Natural killer cell (primary cell): ENCODE measurements at regions of chr9 and their contacts with region 1.

Region 1: GRCh38 chr9:124040935-124041816 is 29.6 kb downstream of the LHX2 start:
- DNase-seq: peak; percentile 56 to 57
- ATAC-seq: peak; percentile 40 to 85 (median 68)
- H3K4me3 ChIP-seq: no peak overlapping the region
- H3K4me3 Mint-ChIP-seq: peak overlapping the region; percentile 35
- H3K27ac ChIP-seq: no peak overlapping the region
- H3K27ac Mint-ChIP-seq: no peak overlapping the region
- H3K4me1 ChIP-seq: peaks cover 9% of the 10 kb centered on the region
- H3K4me1 Mint-ChIP-seq: peaks cover 0 to 7% of the 10 kb centered on the region in 2 donors
- H3K27me3 ChIP-seq: peaks cover 21% of the 10 kb centered on the region
- H3K27me3 Mint-ChIP-seq: peaks cover 26 to 45% of the 10 kb centered on the region in 2 donors
- CTCF ChIP-seq: peak; percentile 93

Region 2: GRCh38 chr9:123401879-123402513 is 639.2 kb before region 1 on chr9:
- intact Hi-C with region 1: loop called (anchors 5 kb)
- DNase-seq: peak in 1 of 2 donors; percentile 21
- ATAC-seq: no peak
- H3K4me3 ChIP-seq: no peak overlapping the region
- H3K4me3 Mint-ChIP-seq: no peak overlapping the region
- H3K27ac ChIP-seq: no peak overlapping the region
- H3K27ac Mint-ChIP-seq: no peak overlapping the region
- H3K4me1 ChIP-seq: no peaks in the 10 kb centered on the region
- H3K4me1 Mint-ChIP-seq: peaks cover 0 to 5% of the 10 kb centered on the region in 2 donors
- H3K27me3 ChIP-seq: no peaks in the 10 kb centered on the region
- H3K27me3 Mint-ChIP-seq: no peaks in the 10 kb centered on the region
- CTCF ChIP-seq: no peak

Region 3: GRCh38 chr9:123544007-123544827 is 497.0 kb before region 1 on chr9:
- intact Hi-C with region 1: loop called (anchors 1 kb)
- DNase-seq: peak in 1 of 2 donors; percentile 52
- ATAC-seq: no peak
- H3K4me3 ChIP-seq: no peak overlapping the region
- H3K4me3 Mint-ChIP-seq: no peak overlapping the region
- H3K27ac ChIP-seq: no peak overlapping the region
- H3K27ac Mint-ChIP-seq: no peak overlapping the region
- H3K4me1 ChIP-seq: no peaks in the 10 kb centered on the region
- H3K4me1 Mint-ChIP-seq: peaks cover 7 to 30% of the 10 kb centered on the region in 2 donors
- H3K27me3 ChIP-seq: no peaks in the 10 kb centered on the region
- H3K27me3 Mint-ChIP-seq: no peaks in the 10 kb centered on the region
- CTCF ChIP-seq: peak; percentile 70

Region 4: GRCh38 chr9:123724211-123724796 is 316.9 kb before region 1 on chr9:
- intact Hi-C with region 1: loop called (anchors 1 kb)
- DNase-seq: peak in 1 of 2 donors; percentile 7
- ATAC-seq: no peak
- H3K4me3 ChIP-seq: no peak overlapping the region
- H3K4me3 Mint-ChIP-seq: no peak overlapping the region
- H3K27ac ChIP-seq: no peak overlapping the region
- H3K27ac Mint-ChIP-seq: no peak overlapping the region
- H3K4me1 ChIP-seq: no peaks in the 10 kb centered on the region
- H3K4me1 Mint-ChIP-seq: peaks cover 7 to 19% of the 10 kb centered on the region in 2 donors
- H3K27me3 ChIP-seq: no peaks in the 10 kb centered on the region
- H3K27me3 Mint-ChIP-seq: no peaks in the 10 kb centered on the region
- CTCF ChIP-seq: no peak